Astrocyte of the cerebellum (primary cell): ENCODE measurements at regions of chr10 and their contacts with region 1.

Region 1: DNA sequence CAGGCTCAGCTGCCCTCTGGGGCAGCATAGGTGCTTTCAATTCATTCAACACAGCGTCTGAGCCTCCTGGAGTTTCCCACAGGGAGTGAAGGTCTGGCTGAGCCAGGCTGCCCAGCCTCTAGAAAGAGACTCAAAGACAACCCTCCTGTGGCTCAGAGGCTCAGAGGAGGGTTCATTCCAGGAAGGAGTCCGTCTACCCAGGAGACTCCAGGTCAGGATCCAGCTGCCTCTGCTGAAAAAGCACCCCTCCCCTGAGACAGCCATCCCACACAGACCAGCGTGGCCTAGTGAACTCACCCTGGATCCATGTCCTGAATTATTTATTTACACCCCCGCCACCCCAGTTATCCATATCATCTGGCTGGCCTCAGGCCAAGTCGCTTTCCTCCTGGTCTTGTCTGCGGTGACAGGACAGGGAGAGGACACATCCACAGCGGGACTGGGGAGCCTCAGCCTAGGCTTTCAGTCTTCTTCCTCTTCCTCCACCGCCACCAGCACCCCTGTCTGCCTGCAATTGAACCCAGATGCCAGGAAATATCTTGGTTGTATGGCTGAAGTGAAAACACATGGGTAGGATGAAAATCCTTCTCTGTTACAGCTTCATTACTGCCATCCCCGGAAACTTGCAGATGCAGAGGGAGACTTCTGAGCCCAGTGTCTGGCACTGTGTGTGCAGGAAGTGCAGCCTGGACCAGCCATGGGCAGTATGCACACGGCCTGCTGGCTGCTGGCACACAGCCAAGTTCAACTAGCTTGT is 44.0 kb upstream of the COL13A1 start:
- DNase-seq: no peak
- H3K4me3 ChIP-seq: no peak overlapping the region
- CTCF ChIP-seq: no peak

Region 2: GRCh38 chr10:69628891-69629290 is 128.8 kb before region 1 on chr10:
- in situ Hi-C with region 1: no loop called
- DNase-seq: no peak
- H3K4me3 ChIP-seq: no peak overlapping the region
- CTCF ChIP-seq: no peak

Region 3: DNA sequence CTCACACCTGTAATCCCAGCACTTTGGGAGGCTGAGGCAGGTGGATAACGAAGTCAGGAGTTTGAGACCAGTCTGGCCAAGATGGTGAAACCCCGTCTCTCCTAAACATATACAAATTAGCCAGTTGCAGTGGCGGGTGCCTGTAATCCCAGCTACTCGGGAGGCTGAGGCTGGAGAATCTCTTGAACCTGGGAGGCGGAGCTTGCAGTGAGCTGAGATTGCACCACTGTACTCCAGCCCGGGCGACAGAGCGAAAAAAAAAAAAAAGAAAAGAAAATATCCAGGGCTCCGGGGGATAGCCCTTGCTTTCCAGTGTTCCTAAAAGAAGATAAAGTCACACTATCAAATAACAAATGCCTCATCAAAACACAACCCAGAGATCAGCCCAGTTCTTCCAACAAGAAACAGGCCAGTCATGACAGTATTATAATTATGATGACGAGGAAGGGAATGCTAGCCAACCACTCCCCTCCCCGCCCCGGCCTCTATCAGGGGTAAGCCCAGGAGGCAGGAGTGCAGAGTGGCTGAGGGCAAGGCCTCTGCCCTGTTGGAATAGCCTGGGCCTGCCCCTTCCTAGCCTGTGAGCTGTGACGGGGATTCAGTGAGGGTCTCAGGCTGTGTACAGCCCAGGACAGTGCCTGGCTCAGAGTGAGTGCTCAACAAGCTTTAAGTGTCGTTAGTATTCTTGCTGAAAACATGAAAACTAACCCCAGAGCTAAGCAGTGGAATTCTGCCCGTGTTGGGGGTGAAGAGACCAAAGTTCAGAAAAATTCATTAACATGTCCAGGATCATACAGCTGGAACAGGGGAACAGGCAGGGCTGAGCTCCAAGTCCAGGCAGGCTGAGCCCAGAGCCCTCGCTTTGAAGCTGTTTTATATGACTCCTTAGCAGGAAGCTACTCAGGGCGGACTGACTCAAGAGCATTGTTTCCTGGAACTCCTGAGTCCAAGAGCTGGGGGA is 73.4 kb before region 1 on chr10:
- in situ Hi-C with region 1: loop called (anchors 5 kb)
- DNase-seq: no peak
- H3K4me3 ChIP-seq: no peak overlapping the region
- CTCF ChIP-seq: no peak

Region 4: GRCh38 chr10:69710008-69710888 is 47.5 kb before region 1 on chr10:
- in situ Hi-C with region 1: loop called (anchors 5 kb)
- DNase-seq: no peak
- H3K4me3 ChIP-seq: no peak overlapping the region
- CTCF ChIP-seq: no peak

Region 5: GRCh38 chr10:69855346-69856111 is 97.8 kb after region 1 on chr10:
- in situ Hi-C with region 1: no loop called
- DNase-seq: no peak
- H3K4me3 ChIP-seq: no peak overlapping the region
- CTCF ChIP-seq: no peak